CD4-positive, alpha-beta T cell (primary cell): ENCODE measurements at regions of chr14 and their contacts with region 1.

Region 1: DNA sequence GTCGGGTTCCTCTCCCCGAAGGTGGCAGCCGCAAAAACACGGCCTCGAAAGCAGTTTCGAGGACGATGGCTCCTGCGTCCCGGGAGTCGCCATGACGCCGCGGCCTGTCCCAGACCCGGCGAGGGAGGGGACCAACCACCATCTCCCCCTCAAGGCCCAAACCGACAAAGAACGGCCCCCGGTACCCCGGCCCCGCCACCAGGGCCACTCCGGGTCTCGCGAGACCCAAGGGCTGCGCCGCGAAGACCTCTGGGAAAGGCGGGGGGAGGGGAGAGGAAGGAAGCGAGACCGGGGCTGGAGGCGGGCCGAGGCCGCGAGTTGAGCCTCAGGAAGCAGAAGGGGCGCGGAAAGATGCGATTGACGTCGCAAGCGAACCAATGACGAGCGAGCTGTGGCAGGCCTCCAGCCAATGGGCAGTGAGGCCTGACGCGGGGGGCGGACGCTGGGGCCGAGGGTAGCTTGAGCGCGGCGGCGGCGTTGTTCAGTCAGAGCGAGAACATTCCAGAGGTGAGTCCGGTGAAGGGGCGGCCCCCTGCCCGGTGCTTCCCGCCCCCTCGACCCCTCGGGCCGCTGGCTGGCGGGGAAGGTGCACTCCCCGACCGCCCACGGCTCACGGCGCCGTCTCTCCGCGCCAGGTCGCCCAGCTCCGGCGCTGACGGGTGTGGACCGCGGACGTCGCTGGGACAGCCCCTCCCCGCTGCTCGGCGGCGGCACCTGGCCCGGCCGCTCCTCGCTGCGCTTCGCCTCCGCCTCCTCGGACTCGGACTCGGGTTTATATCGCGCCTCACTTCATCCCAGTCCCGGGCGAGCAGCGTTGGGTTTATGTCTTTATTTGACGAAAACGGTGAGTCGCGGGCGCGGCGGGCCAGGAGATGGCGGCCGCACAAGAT is at the start of gene EIF5:
- DNase-seq: peak; percentile 96 to 100 (median 98)
- ATAC-seq: peak; percentile 85
- H3K4me3 ChIP-seq: peak within 1 kb of the TSS; percentile 86
- H3K4me3 Mint-ChIP-seq: peak within 1 kb of the TSS; percentile 100
- H3K27ac ChIP-seq: peak within 1 kb of the TSS; percentile 97 to 99
- H3K27ac Mint-ChIP-seq: peak within 1 kb of the TSS; percentile 100
- H3K4me1 ChIP-seq: peaks cover 29% of the 10 kb centered on the region
- H3K4me1 Mint-ChIP-seq: peaks cover 53% of the 10 kb centered on the region
- H3K27me3 ChIP-seq: no peaks in the 10 kb centered on the region
- H3K27me3 Mint-ChIP-seq: peaks cover 4% of the 10 kb centered on the region
- CTCF ChIP-seq: no peak
- total RNA-seq, gene EIF5: 658 TPM

Region 2: DNA sequence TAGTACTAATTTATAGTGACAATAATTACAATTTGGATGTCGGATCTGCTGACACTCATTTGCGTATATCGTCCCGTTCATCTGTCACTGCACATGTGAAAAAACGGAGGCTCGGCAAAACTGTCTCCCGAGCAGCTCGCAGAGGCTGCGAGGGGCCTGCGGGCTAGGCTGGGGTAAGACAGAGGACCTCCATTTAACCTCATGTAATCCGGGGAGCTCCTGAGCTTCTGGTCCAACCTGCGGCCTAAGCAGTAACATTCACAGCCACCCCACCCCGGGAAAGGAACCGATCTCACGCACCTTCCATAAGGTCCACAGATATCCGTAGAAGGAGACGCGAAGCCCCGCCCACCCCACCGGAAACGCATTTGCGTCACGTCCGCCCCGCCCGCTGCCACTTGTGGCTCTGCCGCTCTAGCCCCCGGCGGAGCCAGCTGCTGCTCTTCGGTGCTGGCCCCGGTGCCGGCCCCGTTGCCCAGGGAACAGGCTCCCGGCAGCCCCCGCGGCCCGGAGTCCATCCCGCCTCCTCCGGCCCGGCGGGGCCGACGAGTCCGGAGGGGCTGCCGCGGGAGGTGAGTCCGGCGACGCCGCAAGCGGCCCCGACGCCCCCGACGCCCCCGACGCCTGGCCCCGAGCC is 971.3 kb before region 1 on chr14 and contains the starts of genes CINP and TECPR2:
- CTCF ChIA-PET with region 1: no interaction called
- POLR2A ChIA-PET with region 1: no interaction called
- intact Hi-C with region 1: loop called in 1 of 2 experiments (anchors 5 kb)
- DNase-seq: peak; percentile 92 to 99 (median 96)
- ATAC-seq: peak; percentile 90
- H3K4me3 ChIP-seq: peak within 1 kb of the TSS; percentile 91
- H3K4me3 Mint-ChIP-seq: peak within 1 kb of the TSS; percentile 94
- H3K27ac ChIP-seq: peak within 1 kb of the TSS; percentile 74 to 89
- H3K27ac Mint-ChIP-seq: no peak within 1 kb of the TSS
- H3K4me1 ChIP-seq: peaks cover 27% of the 10 kb centered on the region
- H3K4me1 Mint-ChIP-seq: peaks cover 21% of the 10 kb centered on the region
- H3K27me3 ChIP-seq: no peaks in the 10 kb centered on the region
- H3K27me3 Mint-ChIP-seq: no peaks in the 10 kb centered on the region
- CTCF ChIP-seq: no peak
- total RNA-seq, gene CINP: 12.6 to 14.5 TPM
- total RNA-seq, gene TECPR2: 5.0 to 5.4 TPM

Region 3: DNA sequence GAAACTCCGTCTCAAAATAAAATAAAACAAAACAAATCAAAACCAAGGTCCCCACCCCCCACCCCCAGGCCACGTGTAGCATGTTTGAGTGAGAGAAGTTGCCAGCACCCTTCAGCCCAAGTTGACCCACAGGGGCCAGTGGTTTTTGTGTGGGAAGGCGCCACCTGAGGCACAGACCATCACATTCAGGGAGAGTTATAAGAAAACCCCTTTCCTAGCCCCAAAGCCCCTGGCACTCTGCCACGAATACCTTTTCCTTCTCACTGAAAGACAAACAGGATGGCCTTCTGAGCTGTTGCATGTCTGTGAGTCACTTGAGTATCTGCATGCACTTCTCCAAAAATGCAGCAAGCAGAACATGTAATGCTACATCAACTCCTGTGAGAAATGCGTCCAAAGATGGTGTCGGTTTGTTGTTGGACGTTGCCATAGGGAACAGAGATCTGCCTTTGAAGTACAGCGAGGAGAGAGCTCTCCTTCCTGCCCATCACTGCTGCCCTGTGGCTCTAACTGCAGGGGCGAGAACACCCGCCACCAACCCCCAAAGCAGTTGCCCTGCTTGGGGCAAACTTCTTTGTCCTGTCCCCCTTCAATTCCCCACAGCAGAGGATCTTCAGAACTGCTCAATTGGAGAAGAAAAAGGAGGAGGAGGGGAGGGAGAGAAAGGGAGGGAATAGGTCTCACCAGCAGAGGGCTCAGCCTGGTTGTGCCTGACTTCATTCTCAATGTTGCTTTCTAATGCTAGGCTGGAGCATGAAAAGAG is 559.4 kb before region 1 on chr14:
- CTCF ChIA-PET with region 1: no interaction called
- POLR2A ChIA-PET with region 1: no interaction called
- intact Hi-C with region 1: loop called in 1 of 2 experiments (anchors 5 kb)
- DNase-seq: peak; percentile 48 to 91 (median 59)
- ATAC-seq: peak; percentile 59
- H3K4me3 ChIP-seq: no peak overlapping the region
- H3K4me3 Mint-ChIP-seq: peak overlapping the region; percentile 83
- H3K27ac ChIP-seq: peak overlapping the region; percentile 64 to 92
- H3K27ac Mint-ChIP-seq: peak overlapping the region; percentile 88
- H3K4me1 ChIP-seq: peaks cover 39% of the 10 kb centered on the region
- H3K4me1 Mint-ChIP-seq: peaks cover 26% of the 10 kb centered on the region
- H3K27me3 ChIP-seq: no peaks in the 10 kb centered on the region
- H3K27me3 Mint-ChIP-seq: no peaks in the 10 kb centered on the region
- CTCF ChIP-seq: peak; percentile 73

Region 4: DNA sequence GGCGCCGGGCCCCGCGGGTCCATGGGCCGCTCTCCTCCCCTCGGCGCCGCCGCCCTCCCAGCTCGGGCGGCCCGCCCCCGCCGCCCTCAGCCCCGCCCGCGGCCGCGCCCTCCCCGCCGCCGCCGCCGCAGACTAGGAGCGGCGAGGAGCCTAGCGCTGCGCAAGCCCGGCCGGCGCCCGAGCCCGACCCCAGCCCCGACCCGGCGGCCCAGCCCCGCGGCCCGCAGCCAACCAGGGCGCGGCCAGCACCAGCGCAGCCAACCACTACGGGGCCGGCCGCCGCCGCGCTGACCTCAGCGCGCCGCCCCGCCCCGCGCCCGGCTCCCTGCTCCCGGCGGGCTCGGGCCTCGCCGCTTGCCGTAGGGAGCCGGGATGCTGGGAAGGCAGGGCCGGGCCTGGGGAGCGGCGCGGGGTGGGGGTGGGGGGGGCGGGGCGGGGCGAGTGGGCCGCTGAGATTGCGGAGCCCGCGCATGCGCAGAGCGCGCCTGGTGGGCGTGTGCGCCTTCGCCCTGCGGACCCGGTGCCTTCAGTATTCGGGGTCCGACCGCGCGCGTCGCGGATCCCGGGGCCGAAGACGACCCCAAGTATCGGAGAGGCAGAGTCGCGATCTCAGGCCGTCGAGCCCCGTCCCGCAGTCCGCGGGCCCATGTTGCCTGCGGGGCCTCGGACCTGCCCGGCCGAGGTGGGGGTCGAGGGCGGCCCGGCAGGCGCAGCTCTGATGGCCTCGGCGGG is 276.5 kb before region 1 on chr14 and contains the start of gene CDC42BPB:
- CTCF ChIA-PET with region 1: no interaction called
- POLR2A ChIA-PET with region 1: no interaction called
- intact Hi-C with region 1: no loop called
- DNase-seq: peak; percentile 25 to 82 (median 52)
- ATAC-seq: peak; percentile 89
- H3K4me3 ChIP-seq: peak within 1 kb of the TSS; percentile 52
- H3K4me3 Mint-ChIP-seq: peak within 1 kb of the TSS; percentile 88
- H3K27ac ChIP-seq: no peak within 1 kb of the TSS
- H3K27ac Mint-ChIP-seq: no peak within 1 kb of the TSS
- H3K4me1 ChIP-seq: peaks cover 18% of the 10 kb centered on the region
- H3K4me1 Mint-ChIP-seq: peaks cover 11% of the 10 kb centered on the region
- H3K27me3 ChIP-seq: peaks cover 6 to 12% of the 10 kb centered on the region in 2 experiments
- H3K27me3 Mint-ChIP-seq: peaks cover 15% of the 10 kb centered on the region
- CTCF ChIP-seq: no peak
- total RNA-seq, gene CDC42BPB: 6.6 to 7.6 TPM

Region 5: DNA sequence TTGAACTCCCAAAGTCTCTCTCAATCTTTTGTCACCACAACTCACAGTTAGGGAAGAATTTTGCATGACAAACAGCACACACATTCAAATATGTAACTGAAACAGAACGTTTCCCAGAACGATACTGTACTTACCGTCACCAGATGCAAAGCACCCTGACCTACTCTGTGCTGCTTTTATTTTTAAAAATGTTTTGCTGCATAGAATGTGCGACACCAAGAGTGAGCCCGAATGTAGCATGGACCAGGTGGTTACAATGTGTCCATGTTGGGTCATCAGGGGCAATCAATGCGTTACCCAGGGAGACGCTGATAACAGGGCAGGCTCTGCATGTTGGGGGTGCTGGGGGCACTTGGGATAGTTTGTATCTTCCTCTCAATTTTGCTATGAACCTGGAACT is 14.6 kb before region 1 on chr14:
- CTCF ChIA-PET with region 1: no interaction called
- POLR2A ChIA-PET with region 1: no interaction called
- intact Hi-C with region 1: no loop called
- DNase-seq: no peak
- ATAC-seq: no peak
- H3K4me3 ChIP-seq: no peak overlapping the region
- H3K4me3 Mint-ChIP-seq: no peak overlapping the region
- H3K27ac ChIP-seq: no peak overlapping the region
- H3K27ac Mint-ChIP-seq: no peak overlapping the region
- H3K4me1 ChIP-seq: no peaks in the 10 kb centered on the region
- H3K4me1 Mint-ChIP-seq: no peaks in the 10 kb centered on the region
- H3K27me3 ChIP-seq: peaks cover 0 to 8% of the 10 kb centered on the region in 2 experiments
- H3K27me3 Mint-ChIP-seq: peaks cover 29% of the 10 kb centered on the region
- CTCF ChIP-seq: no peak

Region 6: DNA sequence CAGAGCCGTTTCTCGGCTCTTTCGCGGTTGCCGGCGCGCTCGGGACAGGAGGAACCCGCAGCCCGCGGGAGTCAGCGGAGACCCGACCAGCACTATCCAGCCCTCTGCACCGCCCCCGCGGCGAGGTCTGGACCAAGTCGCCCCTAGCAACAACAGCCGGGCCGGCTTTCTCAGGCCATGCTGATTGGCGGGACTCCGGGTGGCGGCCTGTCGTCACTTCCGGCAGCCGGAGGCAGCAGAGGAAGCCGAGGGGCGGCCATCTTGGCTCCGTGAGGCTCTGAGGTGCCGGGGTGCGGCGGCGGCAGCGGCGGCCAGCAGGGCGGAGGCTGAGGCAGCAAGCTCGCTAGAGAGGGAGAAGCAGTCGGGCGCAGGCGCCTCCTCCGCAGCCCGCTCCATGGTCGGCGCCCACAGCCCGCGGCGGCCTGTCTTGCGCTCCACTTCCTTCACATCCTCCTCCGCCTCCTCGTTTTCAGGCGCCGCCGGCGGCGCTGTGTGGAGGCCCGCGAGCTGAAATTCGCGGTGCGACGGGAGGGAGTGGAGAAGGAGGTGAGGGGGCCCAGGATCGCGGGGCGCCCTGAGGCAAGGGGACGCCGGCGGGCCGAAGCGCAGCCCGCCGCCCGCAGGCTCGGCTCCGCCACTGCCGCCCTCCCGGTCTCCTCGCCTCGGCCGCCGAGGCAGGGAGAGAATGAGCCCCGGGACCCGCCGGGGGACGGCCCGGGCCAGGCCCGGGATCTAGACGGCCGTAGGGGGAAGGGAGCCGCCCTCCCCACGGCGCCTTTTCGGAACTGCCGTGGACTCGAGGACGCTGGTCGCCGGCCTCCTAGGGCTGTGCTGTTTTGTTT is 51.4 kb after region 1 on chr14 and contains the start of gene MARK3:
- CTCF ChIA-PET with region 1: interaction called, 14 read pairs
- POLR2A ChIA-PET with region 1: interaction called, 32 read pairs
- intact Hi-C with region 1: loop called (anchors 1 kb)
- DNase-seq: peak; percentile 91 to 98 (median 94)
- ATAC-seq: peak; percentile 89
- H3K4me3 ChIP-seq: peak within 1 kb of the TSS; percentile 89
- H3K4me3 Mint-ChIP-seq: peak within 1 kb of the TSS; percentile 99
- H3K27ac ChIP-seq: peak within 1 kb of the TSS; percentile 84 to 92
- H3K27ac Mint-ChIP-seq: peak within 1 kb of the TSS; percentile 96
- H3K4me1 ChIP-seq: peaks cover 27% of the 10 kb centered on the region
- H3K4me1 Mint-ChIP-seq: peaks cover 42% of the 10 kb centered on the region
- H3K27me3 ChIP-seq: no peaks in the 10 kb centered on the region
- H3K27me3 Mint-ChIP-seq: no peaks in the 10 kb centered on the region
- CTCF ChIP-seq: peak; percentile 42
- total RNA-seq, gene MARK3: 107 TPM

Region 7: GRCh38 chr14:103427485-103428443 is 93.8 kb after region 1 on chr14:
- CTCF ChIA-PET with region 1: no interaction called
- POLR2A ChIA-PET with region 1: no interaction called
- intact Hi-C with region 1: no loop called
- DNase-seq: peak in 3 of 14 experiments; percentile 43 to 56 (median 52)
- ATAC-seq: peak; percentile 24
- H3K4me3 ChIP-seq: no peak overlapping the region
- H3K4me3 Mint-ChIP-seq: no peak overlapping the region
- H3K27ac ChIP-seq: no peak overlapping the region
- H3K27ac Mint-ChIP-seq: peak overlapping the region; percentile 20
- H3K4me1 ChIP-seq: peaks cover 10% of the 10 kb centered on the region
- H3K4me1 Mint-ChIP-seq: peaks cover 58% of the 10 kb centered on the region
- H3K27me3 ChIP-seq: no peaks in the 10 kb centered on the region
- H3K27me3 Mint-ChIP-seq: no peaks in the 10 kb centered on the region
- CTCF ChIP-seq: no peak

Region 8: DNA sequence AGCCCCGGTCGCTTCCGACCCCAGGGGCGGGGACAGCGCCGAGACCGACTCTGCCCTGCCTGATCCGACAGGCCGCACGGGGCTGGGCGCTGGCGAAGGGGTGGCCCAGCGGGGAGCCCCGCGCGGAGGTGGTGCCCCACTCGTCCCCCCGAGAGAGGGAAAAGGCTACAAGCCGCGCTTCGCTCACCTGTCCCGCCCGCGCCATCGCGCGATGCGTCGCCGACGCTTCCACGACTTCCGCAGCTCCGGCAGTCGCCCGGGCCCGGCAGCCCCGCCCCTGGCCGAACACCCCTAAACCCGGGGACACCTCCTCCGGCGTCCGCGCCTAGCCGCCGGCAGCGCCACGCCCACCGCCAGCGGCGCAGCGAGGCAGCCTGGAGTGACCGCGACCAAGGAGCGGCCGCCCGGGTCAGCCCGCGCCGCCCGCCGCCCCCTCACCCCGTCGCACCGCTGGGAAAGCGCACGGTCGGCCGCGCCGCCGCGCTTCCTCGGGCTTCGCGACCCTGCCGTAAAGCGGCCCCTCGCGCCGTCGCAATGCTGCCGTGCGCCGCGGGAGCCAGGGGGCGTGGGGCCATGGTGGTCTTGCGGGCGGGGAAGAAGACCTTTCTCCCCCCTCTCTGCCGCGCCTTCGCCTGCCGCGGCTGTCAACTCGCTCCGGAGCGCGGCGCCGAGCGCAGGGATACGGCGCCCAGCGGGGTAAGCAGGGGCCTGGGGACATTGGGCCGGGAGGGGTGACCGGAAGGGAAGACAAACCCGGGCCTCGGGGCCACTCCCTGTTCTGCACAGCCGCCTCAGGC is 228.6 kb after region 1 on chr14 and contains the starts of genes BAG5 and COA8:
- CTCF ChIA-PET with region 1: no interaction called
- POLR2A ChIA-PET with region 1: interaction called, 15 read pairs
- intact Hi-C with region 1: loop called in 1 of 2 experiments (anchors 1 kb)
- DNase-seq: peak; percentile 68 to 93 (median 82)
- ATAC-seq: peak; percentile 79
- H3K4me3 ChIP-seq: peak within 1 kb of the TSS; percentile 99
- H3K4me3 Mint-ChIP-seq: peak within 1 kb of the TSS; percentile 96
- H3K27ac ChIP-seq: peak within 1 kb of the TSS; percentile 72 to 85
- H3K27ac Mint-ChIP-seq: peak within 1 kb of the TSS; percentile 94
- H3K4me1 ChIP-seq: peaks cover 56% of the 10 kb centered on the region
- H3K4me1 Mint-ChIP-seq: peaks cover 62% of the 10 kb centered on the region
- H3K27me3 ChIP-seq: no peaks in the 10 kb centered on the region
- H3K27me3 Mint-ChIP-seq: no peaks in the 10 kb centered on the region
- CTCF ChIP-seq: no peak
- total RNA-seq, gene BAG5: 39.4 to 40.3 TPM
- total RNA-seq, gene COA8: 9.1 to 10.7 TPM

Region 9: GRCh38 chr14:103920981-103921854 is 587.2 kb after region 1 on chr14:
- CTCF ChIA-PET with region 1: no interaction called
- POLR2A ChIA-PET with region 1: no interaction called
- intact Hi-C with region 1: loop called in 1 of 2 experiments (anchors 10 kb)
- DNase-seq: peak; percentile 88 to 97 (median 95)
- ATAC-seq: peak; percentile 98
- H3K4me3 ChIP-seq: peak overlapping the region; percentile 100
- H3K4me3 Mint-ChIP-seq: peak overlapping the region; percentile 86
- H3K27ac ChIP-seq: peak overlapping the region; percentile 65 to 68
- H3K27ac Mint-ChIP-seq: peak overlapping the region; percentile 51
- H3K4me1 ChIP-seq: peaks cover 39% of the 10 kb centered on the region
- H3K4me1 Mint-ChIP-seq: peaks cover 18% of the 10 kb centered on the region
- H3K27me3 ChIP-seq: peaks cover 0 to 2% of the 10 kb centered on the region in 2 experiments
- H3K27me3 Mint-ChIP-seq: peaks cover 5% of the 10 kb centered on the region
- CTCF ChIP-seq: peak; percentile 98